ENCODE measurements at regions of chr17 and their contacts with region 1.

Region 1: DNA sequence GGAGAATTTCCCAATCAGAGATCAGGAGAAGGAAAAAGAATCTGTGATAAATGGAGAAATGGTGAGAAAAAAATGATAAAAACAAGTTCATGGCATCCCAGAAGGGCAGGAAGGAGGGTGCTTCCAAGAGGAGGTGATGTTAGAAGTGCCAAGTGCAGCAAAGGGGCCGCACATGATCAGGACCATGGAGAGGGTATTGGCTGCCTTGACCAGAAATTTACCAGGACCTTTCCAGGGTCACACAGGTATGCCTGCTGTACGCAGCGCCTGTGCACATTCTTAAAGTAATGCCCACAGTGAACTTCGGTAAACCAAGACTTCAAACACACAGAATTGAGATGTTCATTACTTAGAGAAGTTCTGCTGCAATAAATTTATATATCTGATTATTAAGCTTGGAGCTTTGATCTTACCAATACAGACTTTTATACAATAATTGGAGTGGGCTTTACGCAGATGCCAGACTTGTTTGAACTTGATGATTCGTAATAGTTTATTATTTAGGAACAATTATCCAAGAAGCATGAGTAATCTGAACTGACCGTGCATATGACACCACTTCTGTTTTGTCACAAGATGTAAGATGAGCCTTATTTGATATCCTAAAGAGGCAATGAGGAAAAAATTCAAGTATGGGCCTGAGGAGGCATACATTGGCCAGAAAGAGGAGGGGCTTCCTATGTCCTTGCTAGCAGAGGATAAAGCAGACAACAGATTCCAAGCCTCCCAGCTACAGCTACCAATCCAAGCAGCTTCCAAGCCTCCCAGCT is 2.2 kb upstream of the KRT33A start:
- DNase-seq: no peak
- ATAC-seq: no peak
- H3K4me3 ChIP-seq: no peak overlapping the region
- H3K4me3 Mint-ChIP-seq: no peak overlapping the region
- H3K27ac ChIP-seq: no peak overlapping the region
- H3K27ac Mint-ChIP-seq: no peak overlapping the region
- H3K4me1 ChIP-seq: peaks cover 6% of the 10 kb centered on the region
- H3K4me1 Mint-ChIP-seq: no peaks in the 10 kb centered on the region
- H3K27me3 ChIP-seq: no peaks in the 10 kb centered on the region
- H3K27me3 Mint-ChIP-seq: peaks cover 7 to 41% of the 10 kb centered on the region in 2 donors
- CTCF ChIP-seq: no peak

Region 2: GRCh38 chr17:41251261-41251660 is 101.5 kb before region 1 on chr17:
- intact Hi-C with region 1: no loop called
- DNase-seq: peak in 1 of 2 donors; percentile 0
- ATAC-seq: no peak
- H3K4me3 ChIP-seq: no peak overlapping the region
- H3K4me3 Mint-ChIP-seq: no peak overlapping the region
- H3K27ac ChIP-seq: no peak overlapping the region
- H3K27ac Mint-ChIP-seq: no peak overlapping the region
- H3K4me1 ChIP-seq: no peaks in the 10 kb centered on the region
- H3K4me1 Mint-ChIP-seq: no peaks in the 10 kb centered on the region
- H3K27me3 ChIP-seq: no peaks in the 10 kb centered on the region
- H3K27me3 Mint-ChIP-seq: peaks cover 23 to 49% of the 10 kb centered on the region in 2 donors
- CTCF ChIP-seq: no peak

Region 3: DNA sequence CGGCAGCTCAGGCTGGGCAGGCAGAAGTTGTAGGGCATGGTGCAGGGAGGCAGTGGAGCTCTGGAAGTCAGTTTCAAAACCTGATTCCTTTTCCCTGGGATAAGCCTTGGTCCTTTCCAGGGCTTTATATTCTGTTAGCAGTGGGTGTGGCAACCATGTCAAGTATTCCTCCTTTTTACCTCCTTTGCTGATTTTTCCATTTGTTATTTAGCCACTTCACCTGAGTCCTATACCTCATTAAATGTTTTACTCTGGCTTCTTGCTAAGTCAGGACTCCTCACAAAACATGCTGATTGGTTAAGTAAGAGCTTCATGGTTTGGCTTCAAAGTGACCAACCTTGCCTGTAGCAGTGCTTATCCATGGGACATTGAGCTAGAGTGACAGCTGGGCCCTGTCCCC is 16.9 kb after region 1 on chr17 and contains the start of gene KRT33B:
- intact Hi-C with region 1: loop called (anchors 1 kb)
- DNase-seq: no peak
- ATAC-seq: no peak
- H3K4me3 ChIP-seq: no peak within 1 kb of the TSS
- H3K4me3 Mint-ChIP-seq: no peak within 1 kb of the TSS
- H3K27ac ChIP-seq: no peak within 1 kb of the TSS
- H3K27ac Mint-ChIP-seq: no peak within 1 kb of the TSS
- H3K4me1 ChIP-seq: no peaks in the 10 kb centered on the region
- H3K4me1 Mint-ChIP-seq: no peaks in the 10 kb centered on the region
- H3K27me3 ChIP-seq: no peaks in the 10 kb centered on the region
- H3K27me3 Mint-ChIP-seq: peaks cover 12 to 23% of the 10 kb centered on the region in 2 donors
- CTCF ChIP-seq: no peak
- total RNA-seq, gene KRT33B: not detected

Measured in natural killer cell (primary cell).